ENCODE measurements at regions of chr9 and their contacts with region 1.

Region 1: DNA sequence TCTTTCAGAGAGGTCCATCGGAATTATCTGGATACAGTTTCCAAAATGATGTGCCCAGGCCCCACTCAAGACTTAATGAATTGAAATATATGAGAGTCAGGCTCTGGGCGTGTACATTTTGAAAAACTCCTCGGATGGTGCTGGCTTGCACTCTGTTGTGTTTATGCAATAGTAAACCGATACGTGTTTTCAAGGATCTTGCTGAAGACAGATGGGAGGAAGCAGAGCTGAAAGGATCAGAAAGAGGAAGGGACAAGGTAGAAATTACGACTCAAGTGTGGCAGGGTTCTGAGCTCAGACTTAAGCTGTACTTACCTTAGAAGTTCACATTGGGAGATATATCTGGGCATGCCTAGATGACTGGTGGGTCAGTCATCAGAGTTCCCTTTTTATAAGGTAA is 13.7 kb upstream of the STOM start:
- DNase-seq: no peak
- ATAC-seq: no peak

Region 2: GRCh38 chr9:120950421-120951388 is 433.0 kb before region 1 on chr9:
- intact Hi-C with region 1: no loop called
- DNase-seq: no peak
- ATAC-seq: peak in 1 of 2 donors; percentile 56

Region 3: DNA sequence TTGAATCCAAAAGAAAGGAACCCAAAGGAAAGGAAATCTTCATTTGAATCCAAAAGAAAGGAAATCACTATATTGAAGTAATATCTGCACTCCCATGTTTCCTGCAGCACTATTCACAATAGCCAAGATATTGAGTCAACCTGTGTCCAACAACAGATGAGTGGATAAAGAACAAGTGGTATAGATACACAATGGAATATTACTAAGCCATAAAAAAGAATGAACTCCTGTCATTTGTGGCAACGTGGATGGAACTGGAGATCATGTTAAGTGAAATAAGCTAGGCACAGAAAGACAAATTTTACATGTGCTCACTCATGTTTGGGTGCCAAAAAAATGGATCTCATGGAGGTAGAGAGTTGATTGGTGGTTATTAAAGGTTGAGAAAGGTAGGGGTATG is 44.2 kb after region 1 on chr9:
- intact Hi-C with region 1: loop called in 1 of 2 experiments (anchors 1 kb)
- DNase-seq: no peak
- ATAC-seq: no peak